Panc1 (cell line): ENCODE measurements at regions of chr22 and their contacts with region 1.

Region 1: DNA sequence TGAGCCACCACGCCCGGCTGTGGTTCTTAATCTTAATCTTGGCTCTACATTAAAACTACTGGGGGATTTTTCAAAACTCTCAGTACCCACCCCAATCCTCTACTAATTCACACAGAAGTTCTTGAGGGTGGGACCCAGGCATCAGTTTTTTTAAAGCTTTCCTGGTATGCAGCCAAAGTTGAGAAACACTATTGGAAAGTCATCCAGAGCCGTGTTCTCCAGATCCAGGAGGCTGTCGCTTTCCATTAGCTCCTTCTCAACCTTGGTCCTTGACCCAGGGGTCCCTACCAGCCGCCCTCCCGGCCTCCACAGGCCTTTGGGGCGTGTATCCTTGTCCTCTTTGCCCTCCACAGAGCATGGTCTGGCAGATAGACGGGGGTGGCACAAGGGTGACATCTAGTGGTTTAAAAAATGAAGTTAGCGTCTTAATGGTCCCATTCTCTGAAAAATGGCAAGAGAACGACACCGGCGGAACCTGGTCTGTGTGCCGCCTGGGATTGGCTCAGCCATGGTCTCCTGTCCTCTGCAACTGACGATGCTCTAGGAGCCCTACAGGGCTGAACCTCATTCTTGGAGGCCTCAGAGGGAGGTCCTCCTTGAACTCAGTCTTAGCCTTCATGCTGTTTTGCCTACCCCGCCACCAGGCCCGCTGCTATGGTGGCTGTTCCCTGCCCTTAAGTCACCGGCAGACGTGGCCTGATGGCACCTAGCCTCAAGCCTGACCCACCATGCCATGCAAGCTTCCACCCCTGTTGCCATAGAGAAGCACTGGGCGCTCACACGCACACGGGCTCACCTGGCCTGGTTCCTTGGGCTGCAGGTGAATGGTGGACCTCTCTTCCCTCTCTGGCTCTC is 152.0 kb upstream of the SYN3 start:
- DNase-seq: no peak
- ATAC-seq: peak; percentile 78
- H3K4me3 ChIP-seq: no peak overlapping the region
- H3K27ac ChIP-seq: no peak overlapping the region
- H3K4me1 ChIP-seq: no peaks in the 10 kb centered on the region
- H3K27me3 ChIP-seq: no peaks in the 10 kb centered on the region
- CTCF ChIP-seq: peak; percentile 82

Region 2: DNA sequence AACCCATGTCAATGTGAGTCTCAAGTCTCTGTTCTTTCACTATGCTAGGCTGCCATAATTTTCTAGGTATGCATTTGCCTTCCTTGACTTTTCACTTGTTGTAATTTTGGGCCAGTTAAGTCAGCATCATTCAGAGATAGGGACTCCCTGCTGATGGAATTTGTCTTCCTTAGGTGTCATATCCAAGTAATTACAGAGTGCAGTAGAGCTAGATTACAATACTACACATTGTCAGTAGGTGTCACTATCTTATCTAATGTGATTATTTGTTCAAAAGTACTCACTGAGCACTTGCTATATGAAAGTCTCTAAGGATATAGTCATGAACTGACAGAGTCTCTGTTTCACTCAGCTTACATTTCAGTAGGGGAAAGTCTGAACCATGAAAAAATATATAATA is 126.9 kb before region 1 on chr22:
- CTCF ChIA-PET with region 1: no interaction called
- POLR2A ChIA-PET with region 1: no interaction called
- in situ Hi-C with region 1: no loop called
- intact Hi-C with region 1: loop called (anchors 10 kb)
- DNase-seq: peak; percentile 4
- ATAC-seq: no peak
- H3K4me3 ChIP-seq: no peak overlapping the region
- H3K27ac ChIP-seq: no peak overlapping the region
- H3K4me1 ChIP-seq: no peaks in the 10 kb centered on the region
- H3K27me3 ChIP-seq: no peaks in the 10 kb centered on the region
- CTCF ChIP-seq: peak; percentile 30; the same call in 1 of the 2 replicates

Region 3: DNA sequence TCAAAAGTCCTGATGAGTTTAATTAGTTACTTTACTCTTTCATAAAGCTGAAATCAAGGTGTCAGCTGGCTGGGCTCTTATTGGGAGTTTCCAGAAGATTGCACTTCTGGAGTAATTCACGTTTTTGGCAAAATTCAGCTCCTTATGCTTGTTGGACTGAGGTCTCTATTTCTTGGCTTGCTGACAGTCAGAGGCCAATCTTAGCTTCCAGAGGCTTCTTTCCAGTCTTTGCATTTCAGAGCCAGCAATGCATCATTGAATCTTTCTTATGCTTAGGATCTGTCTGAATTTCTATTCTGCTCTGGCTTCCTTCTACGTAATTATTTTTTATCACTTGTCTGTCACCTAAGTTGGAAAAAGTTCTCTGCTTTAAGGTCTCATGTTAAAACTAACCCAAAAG is 60.5 kb before region 1 on chr22:
- CTCF ChIA-PET with region 1: no interaction called
- POLR2A ChIA-PET with region 1: no interaction called
- in situ Hi-C with region 1: no loop called
- intact Hi-C with region 1: no loop called
- DNase-seq: no peak
- ATAC-seq: no peak
- H3K4me3 ChIP-seq: no peak overlapping the region
- H3K27ac ChIP-seq: no peak overlapping the region
- H3K4me1 ChIP-seq: no peaks in the 10 kb centered on the region
- H3K27me3 ChIP-seq: no peaks in the 10 kb centered on the region
- CTCF ChIP-seq: no peak

Region 4: DNA sequence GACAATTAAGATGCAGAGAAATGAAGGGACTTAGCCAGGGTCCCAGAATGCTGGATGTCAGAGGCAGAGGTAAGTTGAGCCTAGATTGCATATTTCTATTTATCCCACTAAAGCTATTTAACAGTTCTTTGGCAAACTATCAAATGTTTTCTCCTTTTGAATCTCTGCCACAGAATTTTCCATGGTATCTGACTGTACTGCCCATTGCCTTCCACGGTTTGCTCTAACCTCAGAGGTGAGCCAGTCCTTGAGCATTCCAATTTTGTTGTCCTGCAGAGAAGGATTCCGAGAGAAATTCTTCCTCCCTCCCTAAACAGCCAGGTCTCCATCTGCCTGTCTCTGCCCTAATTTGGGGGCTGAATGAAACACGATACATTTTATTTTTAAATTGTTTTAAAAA is 216.3 kb after region 1 on chr22:
- CTCF ChIA-PET with region 1: interaction called, 12 read pairs
- POLR2A ChIA-PET with region 1: no interaction called
- in situ Hi-C with region 1: no loop called
- intact Hi-C with region 1: no loop called
- DNase-seq: no peak
- ATAC-seq: no peak
- H3K4me3 ChIP-seq: no peak overlapping the region
- H3K27ac ChIP-seq: no peak overlapping the region
- H3K4me1 ChIP-seq: no peaks in the 10 kb centered on the region
- H3K27me3 ChIP-seq: no peaks in the 10 kb centered on the region
- CTCF ChIP-seq: no peak